Activated naive CD4-positive, alpha-beta T cell treated with anti-CD3 and anti-CD28 coated beads for 36 hours (primary cell): ENCODE measurements at regions of chr10 and their contacts with region 1.

Region 1: DNA sequence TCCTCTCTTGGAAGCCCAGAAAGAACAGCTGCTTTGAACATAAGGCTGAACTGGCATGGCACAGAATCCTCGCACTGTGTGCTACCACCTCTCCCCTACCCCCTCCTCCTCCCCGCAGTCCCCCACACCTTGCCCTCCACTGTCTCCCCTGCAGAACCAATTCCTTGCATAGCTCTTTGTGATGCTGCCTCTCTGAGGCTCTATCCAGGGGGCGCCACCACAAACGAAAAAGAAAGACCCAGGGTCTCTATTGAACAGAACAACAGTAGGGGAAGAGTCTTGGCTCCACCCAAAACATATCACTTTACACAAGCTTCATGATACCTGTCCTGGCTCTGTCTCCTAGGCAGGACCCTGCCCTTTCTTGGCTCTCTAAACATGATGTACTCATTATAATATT is 26.2 kb upstream of the EBLN1 start:
- DNase-seq: no peak
- H3K4me3 Mint-ChIP-seq: no peak overlapping the region
- H3K27ac Mint-ChIP-seq: no peak overlapping the region
- H3K4me1 Mint-ChIP-seq: peaks cover 40% of the 10 kb centered on the region
- H3K27me3 Mint-ChIP-seq: no peaks in the 10 kb centered on the region

Region 2: GRCh38 chr10:22022257-22023032 is 221.6 kb before region 1 on chr10:
- CTCF ChIA-PET with region 1: no interaction called
- intact Hi-C with region 1: loop called (anchors 1 kb)
- DNase-seq: peak; percentile 78
- H3K4me3 Mint-ChIP-seq: peak overlapping the region; percentile 65
- H3K27ac Mint-ChIP-seq: peak overlapping the region; percentile 80
- H3K4me1 Mint-ChIP-seq: peaks cover 22% of the 10 kb centered on the region
- H3K27me3 Mint-ChIP-seq: peaks cover 3% of the 10 kb centered on the region

Region 3: DNA sequence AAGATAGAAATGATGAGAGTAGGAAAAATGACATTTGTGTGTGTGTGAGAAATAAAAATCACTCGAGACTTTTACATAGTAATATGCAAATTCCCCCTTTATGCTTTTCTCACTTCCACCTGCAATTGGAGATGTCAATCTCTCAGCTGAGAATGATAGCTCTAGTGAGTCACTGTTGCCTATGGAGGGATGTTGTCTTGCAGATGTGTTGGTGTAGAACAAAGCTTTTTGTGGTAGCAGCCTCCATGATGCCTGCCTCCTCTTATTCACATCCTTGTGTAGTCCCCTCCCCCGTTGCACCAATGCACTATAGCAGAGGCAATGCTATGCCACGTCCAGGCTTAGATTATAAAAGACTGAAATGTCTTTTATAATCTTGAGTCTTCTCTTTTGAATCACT is 135.1 kb after region 1 on chr10:
- CTCF ChIA-PET with region 1: no interaction called
- intact Hi-C with region 1: loop called (anchors 1 kb)
- DNase-seq: peak; percentile 75
- H3K4me3 Mint-ChIP-seq: no peak overlapping the region
- H3K27ac Mint-ChIP-seq: no peak overlapping the region
- H3K4me1 Mint-ChIP-seq: peaks cover 17% of the 10 kb centered on the region
- H3K27me3 Mint-ChIP-seq: peaks cover 3% of the 10 kb centered on the region